WTC11 (cell line): ENCODE measurements at regions of chr17 and their contacts with region 1.

Region 1: GRCh38 chr17:39174907-39175694 is 9.1 kb upstream of the ARL5C start:
- DNase-seq: peak; percentile 92
- ATAC-seq: peak; percentile 53
- H3K4me3 Mint-ChIP-seq: peak overlapping the region; percentile 39
- H3K27ac Mint-ChIP-seq: peak overlapping the region; percentile 32; the same call in 1 of the 2 replicates
- H3K4me1 Mint-ChIP-seq: peaks cover 41% of the 10 kb centered on the region
- H3K27me3 Mint-ChIP-seq: peaks cover 12% of the 10 kb centered on the region
- CTCF ChIP-seq: peak; percentile 98

Region 2: DNA sequence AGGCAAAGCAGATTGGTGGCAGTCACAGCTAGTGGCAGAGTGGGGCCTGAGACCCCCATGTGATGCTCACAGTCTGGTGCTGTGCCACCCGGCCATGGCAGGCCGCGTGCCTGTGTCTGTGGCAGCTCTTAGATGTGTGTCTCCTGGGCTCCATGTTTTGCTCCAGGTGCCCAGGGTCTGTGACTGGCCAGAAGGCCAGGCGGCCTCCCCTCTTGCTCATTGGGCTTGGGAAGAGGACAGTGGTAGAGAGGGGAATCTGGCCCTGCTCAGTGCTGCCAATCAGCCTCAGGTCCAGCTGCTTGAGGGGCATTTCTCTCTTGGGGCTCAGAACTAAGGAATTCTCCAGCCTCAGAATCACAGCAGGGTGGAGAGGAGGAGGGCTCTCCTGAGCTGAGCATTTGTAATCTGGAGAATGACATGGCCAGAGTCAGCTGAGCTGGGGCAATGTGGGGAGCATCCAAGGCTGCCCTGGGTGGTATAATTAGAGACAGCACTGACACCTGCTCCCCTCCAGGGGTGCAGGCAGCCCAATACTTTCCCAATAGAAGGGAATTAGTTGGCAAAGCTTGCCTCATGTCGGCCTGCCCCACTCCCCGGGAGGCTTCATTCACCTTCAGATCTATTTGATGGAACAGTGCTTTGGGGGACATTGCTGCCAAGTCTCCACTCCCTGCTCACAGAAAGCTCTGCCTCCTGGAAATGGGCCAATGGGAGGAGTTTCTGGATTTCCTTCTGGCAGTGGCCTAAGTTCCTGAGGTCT is 252.4 kb before region 1 on chr17:
- CTCF ChIA-PET with region 1: interaction called, 18 read pairs
- POLR2A ChIA-PET with region 1: no interaction called
- DNase-seq: peak; percentile 53
- ATAC-seq: peak; percentile 55
- H3K4me3 Mint-ChIP-seq: no peak overlapping the region
- H3K27ac Mint-ChIP-seq: peak overlapping the region; percentile 45; the same call in 1 of the 2 replicates
- H3K4me1 Mint-ChIP-seq: peaks cover 38% of the 10 kb centered on the region
- H3K27me3 Mint-ChIP-seq: no peaks in the 10 kb centered on the region; the same call in 1 of the 2 replicates
- CTCF ChIP-seq: no peak

Region 3: DNA sequence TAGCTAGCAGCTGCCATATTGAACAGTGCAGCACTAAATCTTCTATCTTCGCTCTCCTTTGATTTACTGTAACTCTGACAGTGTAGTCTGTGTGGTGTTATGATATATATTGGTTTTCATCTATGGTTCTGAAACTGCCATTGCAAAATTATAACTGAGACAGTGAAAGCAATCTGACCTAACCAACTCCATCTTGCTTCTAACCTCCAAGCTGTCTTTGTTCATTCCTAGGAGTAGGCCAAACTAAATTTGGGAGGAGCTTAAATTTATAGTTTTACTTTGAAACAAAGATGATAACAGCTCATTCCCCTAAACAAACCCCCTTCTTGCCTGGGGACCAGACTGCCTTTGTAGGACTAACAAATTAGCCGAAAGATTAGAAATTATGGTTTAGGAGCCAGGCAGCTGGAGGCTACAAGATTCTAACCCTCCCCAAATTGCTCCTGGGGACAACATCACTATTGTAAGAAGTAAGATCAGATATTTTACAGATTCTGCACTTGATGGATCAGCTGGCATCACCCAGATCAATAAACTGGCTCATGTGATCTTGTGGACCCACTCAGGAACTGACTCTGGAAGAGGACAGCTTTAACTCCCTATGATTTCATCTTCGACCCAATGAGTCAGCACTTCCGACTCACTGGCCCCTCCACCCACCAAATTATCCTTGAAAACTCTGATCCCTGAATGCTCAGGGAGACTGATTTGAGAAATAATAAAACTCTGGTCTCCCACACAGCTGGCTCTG is 160.9 kb before region 1 on chr17:
- CTCF ChIA-PET with region 1: interaction called, 12 read pairs
- POLR2A ChIA-PET with region 1: no interaction called
- DNase-seq: no peak
- ATAC-seq: no peak
- H3K4me3 Mint-ChIP-seq: no peak overlapping the region
- H3K27ac Mint-ChIP-seq: no peak overlapping the region; the same call in 1 of the 2 replicates
- H3K4me1 Mint-ChIP-seq: peaks cover 35% of the 10 kb centered on the region
- H3K27me3 Mint-ChIP-seq: no peaks in the 10 kb centered on the region; the same call in 1 of the 2 replicates
- CTCF ChIP-seq: no peak

Region 4: DNA sequence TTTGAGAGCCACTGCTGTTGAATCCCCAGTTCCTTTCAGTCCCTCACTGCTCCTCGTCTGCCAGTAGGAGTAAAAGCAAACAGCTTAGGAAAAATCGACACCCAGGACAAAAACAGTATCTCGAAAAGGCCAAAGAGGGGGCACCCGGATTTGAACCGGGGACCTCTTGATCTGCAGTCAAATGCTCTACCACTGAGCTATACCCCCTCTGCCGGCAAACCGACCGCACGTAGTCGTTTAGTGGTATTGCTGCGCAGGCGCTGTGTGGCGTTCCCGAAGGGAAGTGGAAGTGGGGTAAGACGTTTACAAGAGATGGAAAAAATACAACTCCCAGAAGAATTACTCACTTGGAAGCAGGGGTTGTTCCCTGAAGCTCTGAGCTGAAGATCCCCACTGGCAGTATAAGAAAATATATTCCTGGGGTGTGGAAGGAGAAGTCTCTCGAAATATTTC is 21.5 kb before region 1 on chr17:
- CTCF ChIA-PET with region 1: interaction called, 84 read pairs
- POLR2A ChIA-PET with region 1: interaction called, 6 read pairs
- DNase-seq: peak; percentile 92
- ATAC-seq: peak; percentile 22
- H3K4me3 Mint-ChIP-seq: peak overlapping the region; percentile 100
- H3K27ac Mint-ChIP-seq: peak overlapping the region; percentile 13
- H3K4me1 Mint-ChIP-seq: peaks cover 21% of the 10 kb centered on the region
- H3K27me3 Mint-ChIP-seq: peaks cover 43% of the 10 kb centered on the region
- CTCF ChIP-seq: no peak

Region 5: GRCh38 chr17:39199820-39200069 is 24.6 kb after region 1 on chr17:
- CTCF ChIA-PET with region 1: interaction called, 62 read pairs
- POLR2A ChIA-PET with region 1: interaction called, 4 read pairs
- DNase-seq: peak; percentile 83
- ATAC-seq: peak; percentile 25
- H3K4me3 Mint-ChIP-seq: peak overlapping the region; percentile 98
- H3K27ac Mint-ChIP-seq: peak overlapping the region; percentile 100
- H3K4me1 Mint-ChIP-seq: peaks cover 48% of the 10 kb centered on the region
- H3K27me3 Mint-ChIP-seq: no peaks in the 10 kb centered on the region; the same call in 1 of the 2 replicates
- CTCF ChIP-seq: no peak

Region 6: GRCh38 chr17:39225959-39226683 is 51.0 kb after region 1 on chr17:
- CTCF ChIA-PET with region 1: interaction called, 19 read pairs
- POLR2A ChIA-PET with region 1: no interaction called
- DNase-seq: peak; percentile 98
- ATAC-seq: peak; percentile 96
- H3K4me3 Mint-ChIP-seq: peak overlapping the region; percentile 56
- H3K27ac Mint-ChIP-seq: peak overlapping the region; percentile 26; the same call in 1 of the 2 replicates
- H3K4me1 Mint-ChIP-seq: peaks cover 11% of the 10 kb centered on the region
- H3K27me3 Mint-ChIP-seq: peaks cover 45% of the 10 kb centered on the region
- CTCF ChIP-seq: no peak

Region 7: GRCh38 chr17:39244600-39245570 is 69.8 kb after region 1 on chr17:
- CTCF ChIA-PET with region 1: interaction called, 40 read pairs
- POLR2A ChIA-PET with region 1: no interaction called
- DNase-seq: peak; percentile 98
- ATAC-seq: peak; percentile 92
- H3K4me3 Mint-ChIP-seq: no peak overlapping the region
- H3K27ac Mint-ChIP-seq: no peak overlapping the region
- H3K4me1 Mint-ChIP-seq: peaks cover 22% of the 10 kb centered on the region
- H3K27me3 Mint-ChIP-seq: no peaks in the 10 kb centered on the region; the same call in 1 of the 2 replicates
- CTCF ChIP-seq: peak; percentile 94